Endothelial cell of umbilical vein (primary cell): ENCODE measurements at regions of chr18 and their contacts with region 1.

Region 1: DNA sequence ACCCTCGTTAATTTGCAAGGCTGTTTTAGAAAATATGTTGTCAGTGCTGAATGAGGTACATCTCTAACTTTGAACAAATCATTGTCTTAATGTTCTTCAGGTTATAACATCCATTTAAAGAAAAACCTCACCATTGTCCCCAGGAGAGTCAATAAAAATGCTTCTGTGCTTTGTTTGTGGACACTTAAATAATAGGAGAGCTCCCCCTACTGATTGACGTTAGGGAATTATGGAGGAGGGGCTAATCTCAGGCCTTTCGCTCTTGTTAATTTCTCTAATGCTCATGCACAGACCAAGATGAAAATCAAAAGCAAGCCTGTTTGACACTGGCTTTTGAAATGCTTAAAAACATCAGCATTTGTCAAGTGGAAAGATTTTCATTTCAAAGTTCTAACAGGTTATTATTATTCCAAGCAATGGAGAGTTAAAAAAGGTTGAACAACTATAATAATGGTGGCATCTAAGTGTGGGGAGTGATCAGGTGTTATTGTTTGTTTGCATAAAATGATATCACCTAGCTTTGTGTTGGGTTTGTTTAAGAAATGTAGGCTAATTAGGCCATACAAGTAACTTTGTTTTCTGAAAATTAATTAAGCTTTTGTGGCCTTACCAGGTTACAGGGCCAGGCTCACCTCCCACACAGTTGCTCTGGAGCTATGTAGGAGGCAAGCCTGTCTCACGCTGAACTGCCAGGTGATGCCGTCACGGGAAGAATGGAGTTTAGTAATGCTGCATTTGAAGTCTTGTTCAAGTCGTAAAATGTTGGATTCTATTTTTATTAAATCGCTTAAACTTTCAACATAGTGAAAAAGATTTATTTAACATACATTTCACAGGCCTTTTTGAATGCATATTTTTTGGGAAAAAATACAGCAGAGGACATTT is 51.7 kb upstream of the SMIM21 start:
- DNase-seq: peak; percentile 66
- H3K4me3 ChIP-seq: no peak overlapping the region
- H3K27ac ChIP-seq: no peak overlapping the region
- H3K4me1 ChIP-seq: peaks cover 4% of the 10 kb centered on the region
- H3K27me3 ChIP-seq: no peaks in the 10 kb centered on the region
- CTCF ChIP-seq: peak; percentile 48 to 55
- POLR2A ChIP-seq: no peak

Region 2: DNA sequence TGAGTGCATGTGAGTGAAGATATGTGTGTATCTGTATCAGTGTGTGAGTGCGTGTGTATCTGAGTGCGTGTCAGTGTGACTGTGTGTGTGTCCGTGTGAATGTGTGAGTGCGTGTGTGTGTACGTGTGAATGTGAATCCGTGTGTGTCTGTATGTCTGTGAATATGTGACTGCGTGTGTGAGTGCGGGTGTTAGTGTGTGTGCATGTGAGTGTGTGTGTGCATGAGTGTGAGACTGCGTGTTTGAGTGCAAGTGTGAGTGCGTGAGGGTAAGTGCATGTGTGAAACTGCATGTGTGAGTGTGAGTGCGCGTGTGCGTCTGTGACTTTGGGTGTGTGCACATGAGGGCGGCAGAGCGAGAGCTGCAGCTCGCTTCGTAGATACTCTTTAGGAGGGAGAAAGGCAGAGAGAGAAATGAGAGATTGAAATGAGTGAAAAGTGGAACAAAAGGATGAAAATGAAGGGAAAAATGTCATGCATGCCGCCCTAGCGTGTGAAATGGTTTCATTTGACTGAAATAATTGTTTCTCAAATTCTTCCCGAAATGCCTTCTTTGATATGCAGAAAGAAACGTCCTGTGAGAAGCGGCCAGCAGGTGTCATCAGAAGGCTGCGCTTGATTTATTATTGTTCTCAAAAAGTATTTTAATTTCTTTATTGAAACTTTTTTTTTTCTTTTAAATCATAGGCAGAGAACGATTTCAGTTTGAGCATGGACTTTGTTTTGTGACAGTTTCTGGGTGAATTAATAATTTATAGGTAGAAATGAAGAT is 856.0 kb before region 1 on chr18:
- CTCF ChIA-PET with region 1: interaction called, 3 read pairs
- POLR2A ChIA-PET with region 1: no interaction called
- dilution Hi-C with region 1: no loop called
- intact Hi-C with region 1: loop called (anchors 1 kb)
- DNase-seq: peak; percentile 21
- H3K4me3 ChIP-seq: no peak overlapping the region
- H3K27ac ChIP-seq: no peak overlapping the region
- H3K4me1 ChIP-seq: no peaks in the 10 kb centered on the region
- H3K27me3 ChIP-seq: no peaks in the 10 kb centered on the region
- CTCF ChIP-seq: peak; percentile 16 to 30
- POLR2A ChIP-seq: no peak

Region 3: DNA sequence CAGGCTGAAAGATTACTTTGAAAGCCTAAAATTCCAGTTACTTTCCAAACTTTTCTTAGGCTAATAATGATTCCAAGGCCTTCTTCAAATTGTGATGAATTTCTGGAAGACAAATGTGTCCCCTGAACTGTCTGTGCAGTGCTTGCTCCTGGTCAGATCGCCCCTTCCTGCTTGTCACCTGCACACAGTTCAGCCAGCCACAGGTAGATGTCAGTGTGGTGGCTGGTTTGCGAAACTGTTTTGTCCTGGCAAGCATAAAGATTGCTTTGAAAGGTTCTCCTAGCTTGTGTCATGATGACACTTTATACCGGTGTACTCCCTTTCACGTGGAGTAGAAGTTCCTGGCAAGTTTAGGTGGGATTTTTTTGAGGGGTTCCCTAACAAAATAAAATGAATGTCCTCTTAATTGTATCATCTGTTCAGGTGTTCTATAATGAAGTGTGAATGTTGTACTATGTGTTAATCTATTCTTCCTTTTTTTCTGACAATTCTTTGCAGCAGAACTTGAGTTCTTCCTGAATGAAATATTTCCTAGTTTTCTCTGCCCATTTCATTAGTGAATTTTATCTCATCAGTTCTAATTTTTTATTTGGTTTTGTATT is 582.7 kb before region 1 on chr18:
- CTCF ChIA-PET with region 1: no interaction called
- POLR2A ChIA-PET with region 1: no interaction called
- dilution Hi-C with region 1: no loop called
- intact Hi-C with region 1: loop called (anchors 5 kb)
- DNase-seq: peak; percentile 16
- H3K4me3 ChIP-seq: no peak overlapping the region
- H3K27ac ChIP-seq: no peak overlapping the region
- H3K4me1 ChIP-seq: peaks cover 12% of the 10 kb centered on the region
- H3K27me3 ChIP-seq: no peaks in the 10 kb centered on the region
- CTCF ChIP-seq: no peak
- POLR2A ChIP-seq: no peak

Region 4: GRCh38 chr18:75041586-75041985 is 437.7 kb before region 1 on chr18:
- CTCF ChIA-PET with region 1: interaction called, 16 read pairs
- POLR2A ChIA-PET with region 1: no interaction called
- dilution Hi-C with region 1: no loop called
- intact Hi-C with region 1: loop called (anchors 10 kb)
- DNase-seq: peak; percentile 49
- H3K4me3 ChIP-seq: no peak overlapping the region
- H3K27ac ChIP-seq: no peak overlapping the region
- H3K4me1 ChIP-seq: no peaks in the 10 kb centered on the region
- H3K27me3 ChIP-seq: no peaks in the 10 kb centered on the region
- CTCF ChIP-seq: peak; percentile 39 to 52
- POLR2A ChIP-seq: no peak

Region 5: GRCh38 chr18:75393721-75394120 is 85.5 kb before region 1 on chr18:
- CTCF ChIA-PET with region 1: no interaction called
- POLR2A ChIA-PET with region 1: no interaction called
- dilution Hi-C with region 1: no loop called
- intact Hi-C with region 1: no loop called
- DNase-seq: no peak
- H3K4me3 ChIP-seq: no peak overlapping the region
- H3K27ac ChIP-seq: no peak overlapping the region
- H3K4me1 ChIP-seq: no peaks in the 10 kb centered on the region
- H3K27me3 ChIP-seq: no peaks in the 10 kb centered on the region
- CTCF ChIP-seq: no peak
- POLR2A ChIP-seq: no peak

Region 6: GRCh38 chr18:75654851-75655751 is 175.9 kb after region 1 on chr18:
- CTCF ChIA-PET with region 1: no interaction called
- POLR2A ChIA-PET with region 1: no interaction called
- dilution Hi-C with region 1: no loop called
- intact Hi-C with region 1: no loop called
- DNase-seq: no peak
- H3K4me3 ChIP-seq: no peak overlapping the region
- H3K27ac ChIP-seq: no peak overlapping the region
- H3K4me1 ChIP-seq: no peaks in the 10 kb centered on the region
- H3K27me3 ChIP-seq: no peaks in the 10 kb centered on the region
- CTCF ChIP-seq: no peak
- POLR2A ChIP-seq: no peak

Region 7: GRCh38 chr18:76349067-76349715 is 870.0 kb after region 1 on chr18:
- CTCF ChIA-PET with region 1: no interaction called
- POLR2A ChIA-PET with region 1: no interaction called
- dilution Hi-C with region 1: no loop called
- intact Hi-C with region 1: loop called (anchors 10 kb)
- DNase-seq: peak; percentile 59
- H3K4me3 ChIP-seq: no peak overlapping the region
- H3K27ac ChIP-seq: no peak overlapping the region
- H3K4me1 ChIP-seq: no peaks in the 10 kb centered on the region
- H3K27me3 ChIP-seq: no peaks in the 10 kb centered on the region
- CTCF ChIP-seq: peak; percentile 79 to 83
- POLR2A ChIP-seq: no peak